A549 (cell line): ENCODE measurements at regions of chr1 and their contacts with region 1.

Region 1: DNA sequence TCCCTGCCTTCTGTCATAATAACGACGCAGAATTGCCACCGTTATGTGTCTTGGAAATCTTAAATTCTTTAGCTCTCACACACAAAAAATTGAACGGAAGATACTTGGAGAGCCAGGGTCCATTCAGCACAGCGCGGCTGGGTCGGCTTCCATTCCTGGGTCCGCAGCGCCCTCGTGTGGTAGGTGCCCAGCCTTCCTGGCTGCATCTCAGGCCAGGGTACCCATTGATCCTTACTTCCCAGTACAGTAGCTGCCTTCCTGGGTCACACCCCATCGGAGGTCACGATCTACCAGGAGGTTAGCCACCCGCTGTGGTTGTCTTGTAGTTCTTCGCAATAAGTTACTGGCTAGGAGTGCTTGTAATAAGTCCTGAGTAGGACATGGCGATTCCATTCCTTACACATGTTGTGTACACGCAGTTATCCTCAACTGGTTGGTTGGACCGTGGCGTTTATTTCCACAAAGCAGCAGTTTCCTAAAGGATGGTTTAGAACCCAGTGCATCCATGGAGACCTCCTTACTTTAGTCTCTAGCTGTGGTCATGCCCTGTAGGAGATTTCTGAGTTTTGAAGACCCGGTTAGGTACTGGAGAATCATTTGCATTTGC is 9.9 kb upstream of the MTARC1 start:
- DNase-seq: peak; percentile 72 to 91
- ATAC-seq: peak; percentile 99 to 100
- H3K4me3 ChIP-seq: no peak overlapping the region
- H3K27ac ChIP-seq: no peak overlapping the region
- H3K4me1 ChIP-seq: no peaks in the 10 kb centered on the region
- CTCF ChIP-seq: peak; percentile 93
- EP300 ChIP-seq: no peak
- POLR2A ChIP-seq: no peak
- RAD21 ChIP-seq: peak; percentile 94 to 96

Region 2: DNA sequence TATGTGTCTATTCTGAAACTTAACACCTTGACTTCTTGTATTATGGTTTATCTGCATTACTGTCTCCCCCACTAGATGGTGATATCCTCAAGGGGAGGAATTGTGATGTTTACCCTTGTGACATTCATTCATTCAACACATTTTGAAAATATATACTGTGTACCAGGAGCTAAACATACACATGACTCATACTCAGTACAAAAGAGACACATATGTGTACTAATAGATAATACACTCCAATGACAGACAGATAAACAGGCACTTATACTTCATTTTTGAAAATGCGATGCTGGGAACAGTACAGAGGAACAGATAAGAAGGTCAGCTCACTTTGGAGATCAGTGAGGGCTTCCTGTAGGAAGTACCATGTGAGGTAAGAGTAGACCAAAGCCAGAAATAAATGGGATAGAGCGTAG is 495.7 kb before region 1 on chr1:
- CTCF ChIA-PET with region 1: interaction called, 30 read pairs
- POLR2A ChIA-PET with region 1: no interaction called
- DNase-seq: peak; percentile 12 to 26
- ATAC-seq: peak; percentile 56 to 77; a peak in 5 of 6 replicates
- H3K4me3 ChIP-seq: no peak overlapping the region
- H3K27ac ChIP-seq: no peak overlapping the region
- H3K4me1 ChIP-seq: no peaks in the 10 kb centered on the region
- CTCF ChIP-seq: peak; percentile 43
- EP300 ChIP-seq: no peak
- POLR2A ChIP-seq: no peak
- RAD21 ChIP-seq: peak; percentile 55 to 62; a peak in 4 of 5 replicates

Region 3: DNA sequence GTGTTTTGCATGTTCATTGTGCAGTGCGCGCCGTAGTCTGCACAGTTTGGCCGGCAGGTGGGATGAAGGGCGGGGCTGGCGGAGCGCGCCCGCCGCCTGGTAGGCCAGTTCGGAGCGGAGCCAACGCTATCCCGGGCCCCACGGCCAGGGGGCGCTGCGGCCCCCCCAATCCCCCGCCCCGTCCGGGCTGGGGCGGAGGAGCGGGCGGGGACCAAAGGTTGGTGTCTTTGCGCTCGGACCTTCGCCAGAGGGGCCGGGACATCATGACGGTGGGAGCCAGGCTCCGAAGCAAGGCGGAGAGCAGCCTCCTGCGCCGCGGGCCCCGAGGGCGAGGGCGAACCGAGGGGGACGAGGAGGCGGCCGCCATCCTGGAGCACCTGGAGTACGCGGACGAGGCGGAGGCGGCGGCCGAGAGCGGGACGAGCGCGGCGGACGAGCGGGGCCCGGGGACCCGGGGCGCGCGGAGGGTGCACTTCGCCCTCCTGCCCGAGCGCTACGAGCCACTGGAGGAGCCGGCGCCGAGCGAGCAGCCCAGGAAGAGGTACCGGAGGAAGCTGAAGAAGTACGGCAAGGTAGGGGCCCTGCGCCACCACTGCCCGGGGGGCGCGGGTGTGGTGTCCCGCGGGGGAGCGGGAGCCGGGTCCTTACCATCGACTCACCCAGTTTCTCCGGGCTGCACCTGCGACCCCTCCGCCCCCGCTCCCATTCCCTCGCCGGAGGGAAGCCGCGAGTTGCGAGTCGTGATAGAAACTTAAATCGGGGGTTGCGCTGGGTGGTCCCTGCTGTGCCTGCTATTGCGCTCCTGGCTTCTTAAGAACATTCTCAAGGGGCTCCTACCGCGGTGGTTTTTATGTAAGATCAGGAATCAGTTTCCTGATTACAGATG is 86.4 kb before region 1 on chr1 and contains the start of gene C1orf115:
- CTCF ChIA-PET with region 1: interaction called, 23 read pairs
- POLR2A ChIA-PET with region 1: no interaction called
- DNase-seq: peak; percentile 78 to 89
- ATAC-seq: peak; percentile 90 to 96
- H3K4me3 ChIP-seq: peak within 1 kb of the TSS; percentile 85
- H3K27ac ChIP-seq: peak within 1 kb of the TSS; percentile 83 to 93
- H3K4me1 ChIP-seq: no peaks in the 10 kb centered on the region
- CTCF ChIP-seq: peak; percentile 96
- EP300 ChIP-seq: no peak
- POLR2A ChIP-seq: peak; percentile 55
- RAD21 ChIP-seq: peak; percentile 47 to 73
- polyA plus RNA-seq, gene C1orf115: 6.4 and 6.9 TPM in 2 replicates

Region 4: GRCh38 chr1:220733090-220733601 is 43.7 kb before region 1 on chr1:
- CTCF ChIA-PET with region 1: interaction called, 13 read pairs
- POLR2A ChIA-PET with region 1: no interaction called
- DNase-seq: peak; percentile 80 to 89
- ATAC-seq: peak; percentile 79 to 88
- H3K4me3 ChIP-seq: peak overlapping the region; percentile 35; the same call in 2 of the 3 replicates
- H3K27ac ChIP-seq: peak overlapping the region; percentile 81 to 82
- H3K4me1 ChIP-seq: peaks cover 25% of the 10 kb centered on the region
- CTCF ChIP-seq: peak; percentile 79
- EP300 ChIP-seq: no peak
- POLR2A ChIP-seq: no peak
- RAD21 ChIP-seq: peak; percentile 68 to 70

Region 5: DNA sequence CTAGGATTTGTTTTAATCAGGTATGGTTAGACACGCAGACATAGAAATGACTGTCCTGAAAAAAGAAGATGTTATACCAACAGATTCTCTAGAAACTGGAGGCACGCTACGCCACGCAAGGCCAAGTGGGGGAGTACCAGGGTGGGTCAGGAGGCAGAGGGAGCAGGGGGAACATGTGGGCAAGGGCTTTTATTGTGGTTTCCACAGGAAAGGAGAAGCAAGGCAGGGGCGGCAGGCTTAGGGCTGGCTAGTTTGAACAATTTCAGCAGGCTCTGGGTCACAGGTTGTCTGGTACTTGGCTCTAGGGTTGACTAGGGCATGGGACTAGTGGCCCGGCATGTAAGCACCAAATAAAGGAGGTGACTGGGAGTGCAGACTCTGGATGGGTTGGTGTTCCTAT is 21.5 kb before region 1 on chr1:
- CTCF ChIA-PET with region 1: interaction called, 52 read pairs
- POLR2A ChIA-PET with region 1: no interaction called
- DNase-seq: no peak
- ATAC-seq: no peak
- H3K4me3 ChIP-seq: no peak overlapping the region
- H3K27ac ChIP-seq: no peak overlapping the region
- H3K4me1 ChIP-seq: peaks cover 8% of the 10 kb centered on the region; the same call in 2 of the 3 replicates
- CTCF ChIP-seq: no peak
- EP300 ChIP-seq: no peak
- POLR2A ChIP-seq: no peak
- RAD21 ChIP-seq: no peak